ENCODE measurements at regions of chr10 and their contacts with region 1.

Region 1: DNA sequence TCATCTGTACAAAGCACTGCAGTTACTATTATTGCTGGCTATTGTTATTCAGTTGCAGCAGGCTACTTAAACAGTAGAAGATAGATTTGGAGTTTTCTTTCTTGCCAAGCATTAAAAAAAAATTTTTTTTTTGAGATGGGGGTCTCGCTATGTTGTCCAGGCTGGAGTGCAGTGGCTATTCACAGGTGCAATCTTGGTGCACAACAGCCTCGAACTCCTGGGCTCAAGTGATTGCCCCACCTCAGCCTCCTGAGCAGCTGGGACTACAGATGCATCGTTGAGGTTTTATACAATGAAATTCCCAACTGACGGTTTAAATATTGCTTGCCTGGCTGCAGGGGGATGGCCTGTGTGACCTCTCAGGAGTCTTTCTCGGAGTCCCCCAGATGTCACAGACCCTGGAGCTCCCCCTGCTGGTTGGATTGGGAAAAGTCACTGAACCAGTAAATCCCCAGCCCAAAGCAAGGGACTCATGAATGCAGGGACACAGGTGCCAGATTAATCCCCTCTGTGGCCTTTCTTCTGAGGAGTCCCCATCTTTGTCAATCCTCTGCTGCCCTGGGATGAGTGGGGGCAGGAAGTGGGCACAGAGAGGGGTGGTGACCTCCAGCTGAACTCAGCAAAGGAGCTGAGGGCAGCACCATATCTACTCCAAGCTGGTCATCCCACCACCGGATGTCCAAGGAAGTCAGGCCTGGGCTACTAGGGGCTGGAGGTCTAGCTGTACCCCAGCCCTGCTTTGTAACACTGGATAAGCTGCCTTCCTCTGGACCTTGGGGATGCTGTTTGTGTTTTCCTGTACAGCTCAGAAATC is 149.6 kb downstream of the C10orf105 start:
- DNase-seq: peak; percentile 62
- ATAC-seq: peak; percentile 67
- H3K4me3 Mint-ChIP-seq: no peak overlapping the region
- H3K27ac Mint-ChIP-seq: no peak overlapping the region
- H3K4me1 Mint-ChIP-seq: no peaks in the 10 kb centered on the region
- H3K27me3 Mint-ChIP-seq: peaks cover 5% of the 10 kb centered on the region
- CTCF ChIP-seq: no peak

Region 2: DNA sequence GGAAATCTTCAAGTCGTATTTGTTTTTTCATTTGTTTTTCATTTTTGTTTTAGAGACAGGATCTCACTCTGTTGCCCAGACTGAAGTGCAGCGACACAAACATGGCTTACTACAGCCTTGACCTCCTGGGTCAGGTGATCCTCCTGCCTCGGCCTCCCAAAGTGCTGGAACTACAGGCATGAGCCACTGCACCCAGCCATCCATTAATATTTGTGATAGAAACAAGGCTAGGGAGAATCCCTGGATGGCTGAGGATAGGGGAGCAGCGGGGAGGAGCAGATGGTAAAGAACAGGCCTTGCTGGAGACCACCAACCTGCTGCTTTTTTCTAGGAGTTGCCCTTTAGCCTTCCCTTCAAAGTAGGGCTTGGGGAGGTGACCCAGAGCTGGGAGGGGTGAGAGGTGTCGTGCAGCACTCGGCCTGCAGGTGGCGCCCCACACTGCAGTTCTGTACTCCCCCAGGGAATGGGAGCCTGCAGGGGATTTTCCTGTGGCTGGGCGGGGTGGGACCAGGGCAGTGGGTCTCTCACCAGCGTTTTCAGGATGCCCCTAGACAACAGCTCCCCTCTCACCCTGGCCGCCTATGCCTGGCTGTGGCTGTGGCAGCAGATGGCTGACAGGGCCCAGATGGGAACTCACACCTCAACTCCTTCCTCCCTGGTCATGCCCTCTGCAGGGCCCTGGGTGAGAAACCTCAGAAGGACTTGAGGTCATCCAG is 185.9 kb before region 1 on chr10:
- CTCF ChIA-PET with region 1: interaction called, 48 read pairs
- POLR2A ChIA-PET with region 1: no interaction called
- intact Hi-C with region 1: loop called (anchors 1 kb)
- DNase-seq: peak; percentile 82
- ATAC-seq: peak; percentile 100
- H3K4me3 Mint-ChIP-seq: no peak overlapping the region
- H3K27ac Mint-ChIP-seq: no peak overlapping the region
- H3K4me1 Mint-ChIP-seq: peaks cover 7% of the 10 kb centered on the region
- H3K27me3 Mint-ChIP-seq: peaks cover 3% of the 10 kb centered on the region
- CTCF ChIP-seq: no peak

Region 3: DNA sequence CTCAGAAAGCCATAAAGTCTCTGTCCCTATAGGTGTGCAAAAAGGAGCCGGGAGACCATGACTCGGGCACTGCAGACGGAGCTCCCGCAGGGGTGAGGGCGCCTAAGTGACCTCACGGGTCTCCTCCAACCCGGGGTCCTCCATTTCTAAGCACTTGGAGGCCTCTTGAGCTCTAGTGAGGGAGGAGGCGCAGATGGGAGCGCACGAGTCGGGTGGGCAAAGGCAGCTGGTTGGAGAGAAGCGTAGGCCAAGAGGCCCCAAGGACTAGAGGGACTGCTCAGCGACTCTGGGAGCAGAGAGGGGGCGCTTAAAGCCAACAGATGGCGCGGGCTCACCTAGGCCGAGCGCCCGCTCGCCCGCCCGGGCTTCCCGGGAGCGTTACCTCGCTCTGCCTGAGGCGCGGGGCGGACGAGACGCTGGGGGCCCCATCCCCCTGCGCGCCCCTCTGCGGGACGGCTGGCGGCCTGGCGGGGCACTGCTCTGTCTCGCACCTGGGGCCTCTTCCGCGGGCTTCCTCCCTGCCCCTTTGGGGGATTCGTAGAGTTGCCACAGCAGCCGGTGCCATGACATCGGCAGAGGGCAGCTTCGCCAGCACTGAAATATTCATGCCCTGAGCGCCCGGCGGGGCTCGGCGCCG is 173.8 kb before region 1 on chr10:
- CTCF ChIA-PET with region 1: interaction called, 20 read pairs
- POLR2A ChIA-PET with region 1: interaction called, 3 read pairs
- intact Hi-C with region 1: loop called (anchors 1 kb)
- DNase-seq: peak; percentile 54
- ATAC-seq: peak; percentile 71
- H3K4me3 Mint-ChIP-seq: peak overlapping the region; percentile 78
- H3K27ac Mint-ChIP-seq: no peak overlapping the region
- H3K4me1 Mint-ChIP-seq: peaks cover 8% of the 10 kb centered on the region
- H3K27me3 Mint-ChIP-seq: peaks cover 52% of the 10 kb centered on the region
- CTCF ChIP-seq: no peak